AG04450 (cell line): ENCODE measurements at regions of chr11 and their contacts with region 1.

Region 1: DNA sequence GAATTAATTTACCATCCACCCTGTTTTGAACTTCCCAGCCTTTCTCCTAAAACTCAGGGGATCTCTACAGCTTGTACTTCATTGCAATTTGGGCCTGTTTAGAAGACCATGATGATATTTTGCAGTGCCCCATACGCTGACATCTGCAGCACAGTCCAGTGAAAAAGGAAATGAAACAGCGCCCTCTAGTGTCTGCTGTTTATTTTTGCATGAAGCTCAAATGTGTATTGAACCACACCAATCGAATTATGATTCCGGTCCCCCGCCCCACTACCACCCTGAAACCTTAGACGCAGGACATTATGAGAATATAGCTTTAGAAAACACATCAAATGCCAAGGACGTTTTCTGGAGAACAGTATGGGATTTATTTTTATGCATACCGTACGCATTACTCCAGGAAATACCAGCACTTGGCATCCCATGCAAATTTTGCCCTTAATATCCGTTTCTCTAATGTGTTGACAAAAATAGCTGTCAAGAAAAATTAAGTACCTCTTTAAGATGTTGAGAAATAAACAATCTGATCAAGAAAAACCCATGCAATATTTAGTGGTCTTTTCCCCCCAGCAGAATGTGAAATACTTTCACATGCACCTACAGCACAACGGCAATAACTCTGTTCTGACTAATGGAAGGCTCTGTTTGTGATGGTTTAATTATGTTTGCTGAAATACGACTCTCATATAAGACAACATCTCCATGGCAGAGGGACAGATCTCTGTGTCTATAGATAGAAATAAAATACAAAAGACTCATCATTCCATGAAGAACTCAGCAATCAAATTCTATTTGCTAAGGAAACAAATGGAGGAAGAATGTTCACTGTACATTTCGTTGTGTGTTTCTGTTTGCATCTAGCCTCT is 93.9 kb downstream of the TECTA start:
- DNase-seq: peak; percentile 39
- H3K4me3 ChIP-seq: no peak overlapping the region
- H3K27ac ChIP-seq: no peak overlapping the region
- H3K27me3 ChIP-seq: peaks cover 4% of the 10 kb centered on the region
- CTCF ChIP-seq: peak; percentile 80

Region 2: GRCh38 chr11:120511116-120511819 is 683.7 kb before region 1 on chr11 and contains the start of gene GRIK4:
- CTCF ChIA-PET with region 1: interaction called, 14 read pairs
- POLR2A ChIA-PET with region 1: no interaction called
- DNase-seq: no peak
- H3K4me3 ChIP-seq: peak within 1 kb of the TSS; percentile 57
- H3K27ac ChIP-seq: no peak within 1 kb of the TSS
- H3K27me3 ChIP-seq: peaks cover 9% of the 10 kb centered on the region
- CTCF ChIP-seq: peak; percentile 92
- polyA plus RNA-seq, gene GRIK4: 0.55 and 0.68 TPM in 2 replicates

Region 3: DNA sequence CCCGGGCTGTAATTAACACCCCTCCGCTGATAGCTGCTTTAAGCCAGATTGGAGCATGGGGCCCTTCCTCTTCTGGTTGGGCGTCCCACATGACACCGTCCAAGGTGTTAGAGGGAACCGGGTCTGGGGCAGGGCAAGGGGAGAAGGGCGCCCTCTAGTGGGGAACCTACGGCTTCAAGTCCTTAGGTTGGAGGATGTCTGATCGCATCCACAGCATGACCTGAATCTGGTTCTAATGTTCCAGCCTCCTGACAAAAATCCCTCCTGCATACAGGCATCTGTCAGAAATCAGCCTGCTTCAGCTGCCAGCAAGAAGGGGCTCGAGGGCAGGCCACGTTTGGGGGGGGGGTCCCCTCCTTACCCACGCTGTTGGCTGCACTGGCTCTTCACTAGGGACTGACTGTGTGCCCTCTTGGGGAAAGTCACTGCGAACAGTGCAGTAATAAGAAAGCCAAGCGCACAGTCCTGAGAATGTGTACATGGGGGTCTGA is 265.3 kb before region 1 on chr11:
- CTCF ChIA-PET with region 1: interaction called, 10 read pairs
- POLR2A ChIA-PET with region 1: no interaction called
- DNase-seq: no peak
- H3K4me3 ChIP-seq: no peak overlapping the region
- H3K27ac ChIP-seq: no peak overlapping the region
- H3K27me3 ChIP-seq: peaks cover 10% of the 10 kb centered on the region
- CTCF ChIP-seq: peak; percentile 57

Region 4: GRCh38 chr11:121207485-121208115 is 12.6 kb after region 1 on chr11:
- CTCF ChIA-PET with region 1: interaction called, 33 read pairs
- POLR2A ChIA-PET with region 1: no interaction called
- DNase-seq: no peak
- H3K4me3 ChIP-seq: no peak overlapping the region
- H3K27ac ChIP-seq: no peak overlapping the region
- H3K27me3 ChIP-seq: no peaks in the 10 kb centered on the region
- CTCF ChIP-seq: no peak

Region 5: GRCh38 chr11:121229495-121230215 is 34.7 kb after region 1 on chr11:
- CTCF ChIA-PET with region 1: interaction called, 13 read pairs
- POLR2A ChIA-PET with region 1: no interaction called
- DNase-seq: no peak
- H3K4me3 ChIP-seq: no peak overlapping the region
- H3K27ac ChIP-seq: no peak overlapping the region
- H3K27me3 ChIP-seq: peaks cover 11% of the 10 kb centered on the region
- CTCF ChIP-seq: no peak

Region 6: GRCh38 chr11:121591405-121592033 is 396.6 kb after region 1 on chr11:
- CTCF ChIA-PET with region 1: interaction called, 15 read pairs
- POLR2A ChIA-PET with region 1: no interaction called
- DNase-seq: peak; percentile 63
- H3K4me3 ChIP-seq: no peak overlapping the region
- H3K27ac ChIP-seq: no peak overlapping the region
- H3K27me3 ChIP-seq: no peaks in the 10 kb centered on the region
- CTCF ChIP-seq: peak; percentile 89